GM10248 (cell line): ENCODE measurements at regions of chr9 and their contacts with region 1.

Region 1: DNA sequence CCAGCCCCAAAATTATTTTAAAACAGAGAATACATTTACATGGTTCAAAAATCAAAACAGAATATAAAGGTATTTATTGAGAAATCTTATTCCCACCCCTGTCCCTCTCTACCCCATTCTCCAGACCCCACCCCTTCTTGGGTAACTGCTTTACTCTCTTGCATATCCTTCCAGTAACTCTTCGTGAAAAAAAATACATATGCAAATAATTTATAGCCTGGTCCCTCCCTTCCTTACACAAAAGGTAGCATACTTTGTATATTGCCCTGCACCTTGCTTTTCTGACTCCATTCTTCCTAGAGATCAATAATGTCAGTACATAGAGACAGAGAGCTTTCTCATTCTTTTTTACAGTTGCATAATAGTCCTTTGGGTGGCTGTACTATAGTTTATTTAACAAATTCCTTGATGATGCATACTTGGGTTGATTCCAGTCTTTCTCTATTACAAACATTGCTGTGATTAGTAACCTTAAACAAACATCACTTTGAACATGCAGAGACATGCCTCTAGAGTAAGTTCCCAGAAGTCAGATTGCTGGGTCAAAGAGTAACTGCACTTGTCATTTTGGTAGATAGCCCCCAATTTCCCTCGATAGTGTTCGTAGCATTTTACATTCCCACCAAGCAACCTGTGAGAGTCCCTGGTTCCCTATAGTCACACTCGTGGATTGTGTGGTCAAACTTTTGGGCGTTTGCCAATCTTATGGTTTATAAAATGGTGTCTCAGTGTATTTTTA is 47.8 kb downstream of the STOM start:
- DNase-seq: no peak
- CTCF ChIP-seq: no peak

Region 2: DNA sequence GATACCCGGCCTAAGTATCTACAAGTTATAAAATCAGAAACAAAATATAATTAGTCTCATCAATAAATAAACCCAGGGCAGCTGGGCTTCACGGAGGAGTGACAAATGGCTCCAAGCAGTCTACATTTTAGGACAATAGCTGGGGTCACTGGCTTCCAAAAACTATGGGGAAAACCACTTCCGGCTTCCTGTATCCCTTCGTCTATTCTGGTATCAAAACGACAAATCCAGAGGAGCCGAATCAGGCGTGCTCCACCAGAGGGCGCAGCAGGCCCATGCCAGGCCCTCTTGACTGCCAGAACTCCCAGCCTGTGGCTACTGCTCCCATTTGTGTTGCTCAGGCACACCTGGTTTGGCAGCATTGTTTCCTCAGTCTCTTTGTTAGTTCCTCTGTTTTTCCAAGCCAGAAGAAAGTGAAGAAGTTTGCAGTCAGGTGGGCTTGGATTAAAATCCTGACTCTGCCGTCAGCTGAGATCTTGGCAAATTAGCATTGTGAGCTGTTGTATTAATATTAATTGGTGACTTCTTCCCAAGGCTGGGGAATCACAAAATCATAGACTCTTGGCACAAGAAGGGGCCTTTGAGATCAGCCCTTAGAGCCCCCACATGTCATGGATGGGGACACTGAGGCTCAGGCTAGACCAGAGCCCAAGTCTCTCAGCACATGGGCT is 108.9 kb before region 1 on chr9:
- CTCF ChIA-PET with region 1: interaction called, 18 read pairs
- POLR2A ChIA-PET with region 1: no interaction called
- DNase-seq: peak; percentile 71
- CTCF ChIP-seq: peak; percentile 82

Region 3: GRCh38 chr9:121286973-121287741 is 35.0 kb before region 1 on chr9:
- CTCF ChIA-PET with region 1: interaction called, 13 read pairs
- POLR2A ChIA-PET with region 1: no interaction called
- DNase-seq: no peak
- CTCF ChIP-seq: no peak

Region 4: GRCh38 chr9:121340676-121341392 is 18.6 kb after region 1 on chr9:
- CTCF ChIA-PET with region 1: interaction called, 63 read pairs
- POLR2A ChIA-PET with region 1: no interaction called
- DNase-seq: peak; percentile 65
- CTCF ChIP-seq: no peak

Region 5: GRCh38 chr9:121369595-121370265 is 47.5 kb after region 1 on chr9 and contains the start of gene STOM:
- CTCF ChIA-PET with region 1: interaction called, 36 read pairs
- POLR2A ChIA-PET with region 1: no interaction called
- DNase-seq: no peak
- CTCF ChIP-seq: no peak

Region 6: GRCh38 chr9:121393318-121393717 is 71.1 kb after region 1 on chr9:
- CTCF ChIA-PET with region 1: interaction called, 294 read pairs
- POLR2A ChIA-PET with region 1: interaction called, 8 read pairs
- DNase-seq: no peak
- CTCF ChIP-seq: no peak